ENCODE measurements at regions of chr2 and their contacts with region 1.

Region 1: DNA sequence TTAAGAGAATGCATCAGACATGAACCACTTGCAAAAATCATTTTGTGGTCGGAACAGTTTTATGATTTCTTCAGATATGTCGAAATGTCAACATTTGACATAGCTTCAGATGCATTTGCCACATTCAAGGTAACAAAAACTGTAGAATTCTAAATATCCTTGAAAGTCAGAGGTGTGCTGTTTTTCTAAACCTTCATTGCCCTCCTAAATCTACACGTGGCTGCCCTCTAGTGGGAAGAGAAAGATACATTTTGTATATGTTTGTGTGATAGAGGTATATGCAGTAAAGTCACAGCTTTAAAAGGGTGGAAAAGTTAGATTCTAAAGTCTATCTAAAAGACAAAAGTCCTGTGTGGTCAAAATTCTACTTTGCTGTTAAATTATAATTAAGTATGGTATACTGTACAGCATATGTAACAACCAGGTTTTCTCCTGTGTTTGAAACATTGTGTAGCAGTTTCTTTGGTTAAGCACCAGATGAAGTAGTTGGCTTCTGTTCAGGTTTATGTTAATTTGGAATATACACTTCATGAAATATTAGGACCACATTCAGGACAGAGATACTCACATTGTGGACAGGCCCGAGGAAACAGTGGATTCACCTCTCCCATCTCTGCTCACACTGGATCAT is 65.9 kb upstream of the ITM2C start:
- DNase-seq: peak in 1 of 3 donors; percentile 65
- ATAC-seq: peak; percentile 49
- H3K4me3 ChIP-seq: no peak overlapping the region
- H3K4me1 ChIP-seq: peaks cover 30% of the 10 kb centered on the region
- CTCF ChIP-seq: peak; percentile 37

Region 2: GRCh38 chr2:230712443-230713330 is 86.2 kb before region 1 on chr2 and contains the start of gene CAB39:
- intact Hi-C with region 1: loop called in 1 of 2 experiments (anchors 10 kb)
- DNase-seq: peak; percentile 90 to 93 (median 93)
- ATAC-seq: peak; percentile 89
- H3K4me3 ChIP-seq: peak within 1 kb of the TSS; percentile 99
- H3K4me1 ChIP-seq: peaks cover 28% of the 10 kb centered on the region
- CTCF ChIP-seq: peak; percentile 96
- total RNA-seq, gene CAB39: 112 to 155 (median 115) TPM

Region 3: GRCh38 chr2:230956827-230957755 is 158.2 kb after region 1 on chr2:
- intact Hi-C with region 1: no loop called
- DNase-seq: peak; percentile 66 to 78 (median 68)
- ATAC-seq: peak; percentile 78
- H3K4me3 ChIP-seq: no peak overlapping the region
- H3K4me1 ChIP-seq: no peaks in the 10 kb centered on the region
- CTCF ChIP-seq: no peak

Measured in mucosa of descending colon (tissue), 3 donors.